ENCODE measurements at regions of chr22 and their contacts with region 1.

Region 1: DNA sequence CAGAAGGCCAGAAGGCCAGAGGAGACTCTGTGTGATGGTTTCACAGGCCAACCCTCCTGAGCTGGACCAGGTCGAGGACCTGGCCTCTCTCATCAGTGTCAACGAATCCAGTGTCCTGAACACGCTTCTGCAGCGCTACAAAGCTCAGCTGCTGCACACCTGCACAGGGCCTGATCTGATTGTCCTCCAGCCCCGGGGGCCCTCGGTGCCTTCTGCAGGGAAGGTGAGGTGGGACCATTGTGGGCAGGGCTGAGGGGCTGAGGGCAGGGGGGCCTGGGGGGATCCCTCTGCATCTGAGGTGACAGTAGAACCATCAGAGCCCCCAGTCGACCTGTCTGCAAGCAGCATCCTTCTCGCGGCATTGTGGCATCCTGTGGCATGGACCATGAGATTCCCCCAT is 30.3 kb downstream of the MYO18B start:
- DNase-seq: peak in 1 of 5 donors; percentile 25
- ATAC-seq: no peak
- H3K4me3 ChIP-seq: no peak overlapping the region
- H3K27ac ChIP-seq: no peak overlapping the region
- H3K4me1 ChIP-seq: peaks cover 0 to 5% (median 0%) of the 10 kb centered on the region in 12 donors
- H3K27me3 ChIP-seq: no peaks in the 10 kb centered on the region
- CTCF ChIP-seq: no peak
- POLR2A ChIP-seq: no peak

Region 2: GRCh38 chr22:25465949-25466348 is 306.3 kb before region 1 on chr22:
- intact Hi-C with region 1: loop called (anchors 1 to 5 kb)
- DNase-seq: no peak
- ATAC-seq: no peak
- H3K4me3 ChIP-seq: no peak overlapping the region
- H3K27ac ChIP-seq: no peak overlapping the region
- H3K4me1 ChIP-seq: peaks cover 0 to 5% (median 0%) of the 10 kb centered on the region in 12 donors
- H3K27me3 ChIP-seq: no peaks in the 10 kb centered on the region
- CTCF ChIP-seq: no peak
- POLR2A ChIP-seq: no peak